Mammary epithelial cell (primary cell): ENCODE measurements at regions of chr1 and their contacts with region 1.

Region 1: DNA sequence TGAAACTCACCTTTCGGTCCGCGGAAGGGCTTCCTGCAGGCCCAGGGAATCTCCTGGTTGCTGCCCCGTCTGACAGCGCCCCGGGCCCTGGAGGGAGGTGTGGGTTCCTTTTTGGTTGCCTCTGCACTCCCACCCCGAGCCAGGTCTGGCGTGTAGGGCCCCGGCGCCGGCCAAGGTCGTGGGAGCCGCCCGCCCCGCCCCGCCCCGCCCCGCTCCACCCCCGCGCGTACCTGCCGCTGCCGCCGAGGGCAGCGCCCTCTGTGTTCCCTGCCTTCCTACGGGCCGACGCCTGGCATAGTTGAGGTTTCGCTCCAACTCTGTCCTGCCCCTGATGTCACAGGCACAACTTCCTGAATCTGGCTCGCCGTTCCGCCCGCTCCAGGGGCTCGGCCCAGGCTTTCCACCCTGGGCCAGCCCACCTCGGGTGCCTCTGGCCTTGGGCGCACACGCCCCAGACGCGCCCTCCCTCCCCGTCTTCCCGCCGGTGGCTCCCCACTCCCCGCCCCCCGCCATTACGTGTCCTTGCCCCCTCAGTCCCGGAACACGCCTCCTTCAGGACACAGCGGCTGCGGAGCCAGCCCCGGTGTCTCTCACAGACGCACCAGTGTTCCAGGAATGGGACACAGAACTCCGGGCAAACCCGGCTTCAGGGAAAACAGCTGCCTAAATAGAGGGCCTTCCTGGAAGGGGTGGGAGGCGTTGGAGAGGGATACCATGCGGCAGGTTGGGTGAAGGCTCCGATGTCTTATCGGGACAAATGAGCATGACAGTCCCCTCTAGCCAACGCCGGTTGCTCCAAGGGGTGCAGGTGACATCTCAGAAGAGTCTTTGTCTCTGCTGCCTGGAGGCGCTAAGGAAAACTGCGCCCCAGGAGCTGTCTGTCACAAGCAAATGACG is at the start of gene KIAA0040:
- DNase-seq: peak; percentile 84
- H3K4me3 ChIP-seq: peak within 1 kb of the TSS; percentile 71 to 92 (median 90)
- H3K27ac ChIP-seq: peak within 1 kb of the TSS; percentile 98
- H3K4me1 ChIP-seq: peaks cover 75% of the 10 kb centered on the region
- H3K27me3 ChIP-seq: no peaks in the 10 kb centered on the region
- CTCF ChIP-seq: peak in 1 of 2 donors; percentile 27
- total RNA-seq, gene KIAA0040: 34.3 to 75.0 TPM

Region 2: DNA sequence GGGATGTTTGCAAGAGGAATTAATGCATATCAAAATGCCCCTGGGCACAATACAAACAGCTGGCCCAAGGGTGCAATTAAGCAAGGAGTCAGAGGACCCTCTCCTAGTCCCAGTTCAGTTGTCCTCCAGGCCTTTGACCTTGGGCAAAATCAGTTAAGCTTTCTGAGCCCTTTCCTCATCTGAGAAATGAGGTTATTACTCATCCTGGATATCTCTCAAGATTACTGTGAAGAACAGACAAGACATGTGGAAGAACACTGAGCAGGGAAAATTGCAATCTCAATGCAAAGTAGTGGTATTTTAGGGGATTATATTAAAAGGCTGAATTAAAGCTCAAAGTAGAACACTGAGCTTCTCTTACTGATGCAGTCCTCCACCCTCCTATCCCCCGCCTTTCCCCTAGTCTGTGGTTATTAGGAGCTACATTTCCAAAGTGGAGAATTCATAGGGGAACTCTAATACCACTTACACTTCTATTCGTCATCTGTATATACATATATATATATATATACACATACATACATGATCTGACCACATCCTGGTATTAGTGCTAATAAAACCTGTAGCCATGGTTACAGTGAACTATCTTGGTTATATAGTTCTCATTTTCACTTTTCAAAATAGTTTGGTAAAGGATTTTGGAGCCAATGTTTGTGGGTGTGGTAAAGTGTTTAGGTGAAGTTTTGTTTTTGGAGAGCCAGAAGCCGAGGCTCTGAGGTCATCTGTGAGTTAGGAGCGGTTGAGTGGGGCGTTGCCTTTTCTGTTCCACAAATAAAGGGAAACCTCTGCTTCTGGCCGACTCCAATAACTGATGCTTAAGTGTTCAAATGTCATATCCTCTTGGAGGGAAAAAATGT is 18.3 kb before region 1 on chr1:
- CTCF ChIA-PET with region 1: interaction called, 4 read pairs
- dilution Hi-C with region 1: no loop called
- in situ Hi-C with region 1: no loop called
- intact Hi-C with region 1: loop called (anchors 2 kb)
- DNase-seq: no peak
- H3K4me3 ChIP-seq: no peak overlapping the region
- H3K27ac ChIP-seq: no peak overlapping the region
- H3K4me1 ChIP-seq: peaks cover 33% of the 10 kb centered on the region
- H3K27me3 ChIP-seq: no peaks in the 10 kb centered on the region
- CTCF ChIP-seq: no peak

Region 3: GRCh38 chr1:175206687-175207086 is 13.8 kb after region 1 on chr1:
- CTCF ChIA-PET with region 1: no interaction called
- dilution Hi-C with region 1: no loop called
- in situ Hi-C with region 1: no loop called
- intact Hi-C with region 1: loop called (anchors 1 kb)
- DNase-seq: peak; percentile 86
- H3K4me3 ChIP-seq: no peak overlapping the region
- H3K27ac ChIP-seq: no peak overlapping the region
- H3K4me1 ChIP-seq: peaks cover 26% of the 10 kb centered on the region
- H3K27me3 ChIP-seq: no peaks in the 10 kb centered on the region
- CTCF ChIP-seq: no peak

Region 4: DNA sequence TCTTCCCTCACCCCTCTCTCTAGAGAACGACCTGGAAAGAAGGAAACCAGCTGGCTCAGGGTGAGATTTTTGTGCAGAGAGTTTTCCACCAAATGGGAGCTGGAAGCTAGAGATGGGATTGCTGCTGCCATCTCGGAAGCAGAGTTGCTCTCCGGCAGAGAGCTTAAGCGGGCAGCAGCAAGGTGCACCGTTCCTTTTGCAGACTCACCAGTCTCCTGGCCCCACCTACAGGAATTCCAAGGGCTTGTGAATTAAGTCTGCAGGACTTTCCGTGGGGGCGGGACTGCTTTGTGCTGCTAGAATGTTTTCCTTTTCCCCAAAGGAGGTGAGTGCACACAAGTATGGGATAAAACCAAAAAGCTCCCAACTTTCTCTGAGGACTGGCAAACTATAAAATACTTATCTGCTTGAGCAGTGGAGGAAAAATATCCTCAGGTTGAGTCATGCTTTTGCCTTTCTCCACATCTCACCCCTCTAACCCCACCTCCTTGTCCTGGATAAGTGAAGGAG is 28.8 kb after region 1 on chr1:
- CTCF ChIA-PET with region 1: interaction called, 7 read pairs
- dilution Hi-C with region 1: no loop called
- in situ Hi-C with region 1: no loop called
- intact Hi-C with region 1: loop called (anchors 1 kb)
- DNase-seq: peak; percentile 88
- H3K4me3 ChIP-seq: peak overlapping the region in 1 of 3 experiments; percentile 14
- H3K27ac ChIP-seq: peak overlapping the region; percentile 78
- H3K4me1 ChIP-seq: peaks cover 46% of the 10 kb centered on the region
- H3K27me3 ChIP-seq: no peaks in the 10 kb centered on the region
- CTCF ChIP-seq: peak; percentile 35 to 64

Region 5: GRCh38 chr1:175267716-175268384 is 75.0 kb after region 1 on chr1:
- CTCF ChIA-PET with region 1: no interaction called
- dilution Hi-C with region 1: no loop called
- in situ Hi-C with region 1: no loop called
- intact Hi-C with region 1: loop called (anchors 1 kb)
- DNase-seq: peak; percentile 17
- H3K4me3 ChIP-seq: no peak overlapping the region
- H3K27ac ChIP-seq: peak overlapping the region; percentile 79
- H3K4me1 ChIP-seq: peaks cover 30% of the 10 kb centered on the region
- H3K27me3 ChIP-seq: no peaks in the 10 kb centered on the region
- CTCF ChIP-seq: no peak

Region 6: GRCh38 chr1:175319418-175320230 is 126.7 kb after region 1 on chr1:
- CTCF ChIA-PET with region 1: interaction called, 3 read pairs
- dilution Hi-C with region 1: no loop called
- in situ Hi-C with region 1: no loop called
- intact Hi-C with region 1: loop called (anchors 1 kb)
- DNase-seq: peak; percentile 51
- H3K4me3 ChIP-seq: no peak overlapping the region
- H3K27ac ChIP-seq: no peak overlapping the region
- H3K4me1 ChIP-seq: peaks cover 7% of the 10 kb centered on the region
- H3K27me3 ChIP-seq: no peaks in the 10 kb centered on the region
- CTCF ChIP-seq: peak; percentile 83 to 96